OCI-LY7 (cell line): ENCODE measurements at regions of chr6 and their contacts with region 1.

Region 1: DNA sequence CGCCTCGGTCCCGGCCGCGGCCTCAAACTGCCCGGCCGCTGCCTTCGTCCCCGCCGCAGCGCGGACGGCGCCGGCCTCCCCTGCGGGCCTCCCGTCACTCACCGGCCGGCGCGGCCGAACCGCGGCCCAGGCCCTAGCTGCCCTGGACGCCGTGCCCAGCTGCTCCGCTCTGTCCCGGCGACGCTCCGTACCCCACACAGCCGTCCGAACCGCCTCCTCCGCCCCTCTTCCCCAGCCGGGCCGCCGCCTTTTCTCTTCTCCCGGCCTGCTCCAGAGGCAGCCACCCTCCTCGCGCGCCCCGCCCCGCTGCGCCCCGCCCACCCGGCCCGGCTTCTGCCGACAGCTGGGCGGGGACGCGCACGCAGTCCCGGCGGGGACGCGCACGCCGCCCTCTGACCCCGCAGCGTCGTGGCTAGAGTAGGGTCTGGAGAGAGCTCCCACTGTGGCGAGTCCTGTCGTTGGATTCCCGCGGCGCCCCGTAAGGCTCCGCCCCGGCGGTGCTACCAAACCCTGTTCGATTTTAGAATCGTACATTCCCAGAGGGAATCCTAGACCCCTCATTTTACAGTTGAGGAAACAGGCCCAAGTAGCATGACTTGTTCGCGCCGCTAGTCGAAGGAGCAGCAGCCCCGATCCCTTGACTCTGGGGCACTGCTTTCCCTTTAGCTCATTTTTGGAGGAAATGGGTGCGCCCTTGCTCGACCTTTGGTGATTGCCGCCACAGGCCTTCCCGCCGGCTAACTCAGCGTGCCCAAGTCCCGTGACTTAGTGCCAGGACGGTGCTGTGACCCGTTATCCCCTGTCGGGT is at the start of gene FBXO30:
- DNase-seq: peak; percentile 90
- H3K4me3 ChIP-seq: peak within 1 kb of the TSS; percentile 97
- H3K27ac ChIP-seq: peak within 1 kb of the TSS; percentile 71
- H3K4me1 ChIP-seq: peaks cover 40% of the 10 kb centered on the region
- CTCF ChIP-seq: 0 out of 2 replicates have a peak, but pooled peaks have one; percentile 18
- total RNA-seq, gene FBXO30: 4.6 and 5.3 TPM in 2 replicates

Region 2: GRCh38 chr6:145734486-145735355 is 80.0 kb before region 1 on chr6:
- CTCF ChIA-PET with region 1: interaction called, 3 read pairs
- POLR2A ChIA-PET with region 1: interaction called, 23 read pairs
- intact Hi-C with region 1: loop called (anchors 1 kb)
- DNase-seq: peak; percentile 78
- H3K4me3 ChIP-seq: peak overlapping the region; percentile 91
- H3K27ac ChIP-seq: peak overlapping the region; percentile 86
- H3K4me1 ChIP-seq: peaks cover 21% of the 10 kb centered on the region
- CTCF ChIP-seq: no peak

Region 3: DNA sequence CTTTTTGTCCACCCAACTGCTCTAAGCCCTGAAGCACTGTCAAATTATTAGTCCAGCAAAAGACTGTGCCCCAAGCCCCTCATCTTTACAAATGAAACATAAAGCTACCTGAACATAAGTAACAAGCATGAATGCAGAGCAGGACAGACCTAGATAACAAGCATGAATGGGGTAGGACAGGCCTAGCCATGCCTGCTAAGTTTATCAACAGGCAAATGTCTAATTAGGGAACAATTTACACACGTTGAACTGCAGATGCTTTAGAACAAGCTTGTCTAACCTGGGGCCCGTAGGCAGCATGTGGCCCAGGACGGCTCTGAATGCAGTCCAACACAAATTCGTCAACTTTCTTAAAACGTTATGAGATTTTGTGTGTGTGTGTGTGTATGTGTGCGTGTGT is 13.7 kb before region 1 on chr6:
- CTCF ChIA-PET with region 1: no interaction called
- POLR2A ChIA-PET with region 1: interaction called, 12 read pairs
- intact Hi-C with region 1: no loop called
- DNase-seq: no peak
- H3K4me3 ChIP-seq: no peak overlapping the region
- H3K27ac ChIP-seq: no peak overlapping the region
- H3K4me1 ChIP-seq: peaks cover 9% of the 10 kb centered on the region
- CTCF ChIP-seq: no peak

Region 4: DNA sequence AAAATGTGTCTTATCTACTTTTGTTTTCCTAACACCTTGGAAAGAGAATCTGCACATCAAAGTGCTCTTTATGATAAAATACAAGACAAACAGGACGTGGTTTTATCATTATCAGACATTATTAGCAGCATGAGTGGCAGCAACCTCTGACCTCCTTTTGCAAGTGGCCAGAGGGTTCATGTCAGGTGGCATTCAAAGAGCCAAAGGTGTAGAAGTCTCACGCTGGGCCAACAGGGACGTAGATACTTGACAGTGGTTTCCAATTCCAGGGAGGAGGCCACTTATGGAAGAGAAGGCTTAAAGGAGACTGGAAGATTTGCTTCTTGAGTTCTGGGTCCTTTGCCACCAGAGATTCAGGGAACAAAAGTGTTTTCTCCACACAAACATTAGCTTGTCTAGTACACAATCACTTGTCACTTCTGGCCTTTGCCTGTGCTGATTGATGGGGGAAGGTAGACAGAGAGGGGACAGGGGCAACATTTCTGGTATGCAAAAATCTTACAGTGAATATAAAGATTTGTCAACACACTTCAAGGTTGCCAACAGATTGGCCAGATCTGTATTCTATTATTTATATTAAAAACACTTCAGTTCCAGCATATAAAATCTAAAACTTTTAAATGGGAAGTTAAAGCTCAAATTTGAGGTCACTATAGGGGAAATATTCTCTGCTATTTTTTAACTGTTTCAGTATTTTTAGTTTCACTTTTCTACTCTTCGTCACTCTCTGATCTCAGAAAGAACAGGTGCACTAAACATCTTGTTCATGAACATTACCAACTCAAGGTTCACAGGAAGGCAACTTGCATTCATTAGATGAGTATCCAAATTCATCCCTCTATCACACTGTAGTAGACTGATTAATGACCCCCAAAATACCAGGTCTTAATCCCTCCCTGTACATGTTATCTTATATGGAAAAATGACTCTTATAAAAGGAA is 52.0 kb after region 1 on chr6:
- CTCF ChIA-PET with region 1: no interaction called
- POLR2A ChIA-PET with region 1: interaction called, 69 read pairs
- intact Hi-C with region 1: loop called (anchors 1 kb)
- DNase-seq: peak; percentile 77
- H3K4me3 ChIP-seq: peak overlapping the region; percentile 58
- H3K27ac ChIP-seq: peak overlapping the region; percentile 96
- H3K4me1 ChIP-seq: peaks cover 83% of the 10 kb centered on the region
- CTCF ChIP-seq: no peak

Region 5: DNA sequence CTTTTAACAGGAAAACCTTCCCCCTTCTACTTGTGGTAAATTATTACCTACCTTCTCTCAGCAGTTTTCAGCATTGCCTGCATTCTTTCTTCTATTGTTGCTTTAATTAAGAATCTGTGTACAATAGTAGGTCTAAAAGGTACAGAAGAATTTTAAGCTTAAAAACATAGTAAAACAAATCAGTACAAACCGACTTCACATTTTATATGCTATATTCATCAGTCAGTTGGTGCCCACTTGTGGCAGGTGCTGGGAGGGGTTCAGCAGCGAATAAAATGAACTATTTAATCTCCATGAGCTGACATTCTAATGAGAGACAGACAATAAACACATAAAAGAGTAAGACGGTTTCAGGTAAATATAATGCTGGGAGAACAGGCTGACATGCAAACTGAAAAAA is 73.3 kb after region 1 on chr6:
- CTCF ChIA-PET with region 1: no interaction called
- POLR2A ChIA-PET with region 1: interaction called, 8 read pairs
- intact Hi-C with region 1: loop called (anchors 5 kb)
- DNase-seq: peak; percentile 64
- H3K4me3 ChIP-seq: no peak overlapping the region
- H3K27ac ChIP-seq: no peak overlapping the region
- H3K4me1 ChIP-seq: peaks cover 7% of the 10 kb centered on the region
- CTCF ChIP-seq: peak; percentile 98

Region 6: DNA sequence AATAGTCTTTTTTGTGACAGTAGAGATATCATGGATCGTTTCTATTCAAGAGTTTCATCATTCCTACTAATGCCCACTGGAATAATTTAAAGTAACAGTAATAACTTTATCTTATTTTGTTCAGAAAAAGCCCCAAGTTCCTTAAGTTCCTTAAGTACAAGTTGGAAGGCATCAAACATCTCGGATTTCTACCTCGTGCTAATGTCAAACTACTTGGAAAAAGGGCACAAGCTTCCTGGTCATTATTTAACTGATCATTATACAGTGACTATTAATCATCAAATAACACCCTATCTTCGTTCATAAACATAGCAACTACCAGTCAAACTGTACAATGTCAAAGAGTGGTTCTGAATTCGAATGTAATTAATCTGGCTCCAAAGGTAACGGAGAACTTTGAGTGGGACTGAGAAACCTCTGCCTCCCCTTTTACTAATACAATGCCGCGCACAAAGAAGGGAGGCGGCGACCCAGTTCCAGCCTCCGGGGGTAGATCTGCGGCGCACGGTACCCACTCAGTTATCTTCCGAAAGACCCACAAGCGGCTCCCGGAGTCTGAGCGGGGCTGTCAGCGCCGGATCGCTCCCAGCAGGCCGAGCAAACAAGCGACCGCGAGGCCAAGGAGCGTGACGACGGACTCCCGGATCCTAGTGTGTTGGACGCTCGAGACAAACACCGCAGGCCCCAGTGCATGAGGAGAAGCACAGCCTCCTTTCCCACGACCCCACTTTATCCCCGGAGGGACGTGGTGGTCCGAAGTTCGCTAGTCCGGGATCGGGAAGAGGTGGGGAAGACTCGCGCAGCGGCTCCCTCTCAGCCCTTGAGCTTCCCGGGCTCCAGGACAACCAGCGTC is 148.7 kb after region 1 on chr6:
- CTCF ChIA-PET with region 1: no interaction called
- POLR2A ChIA-PET with region 1: interaction called, 5 read pairs
- intact Hi-C with region 1: loop called (anchors 1 kb)
- DNase-seq: peak; percentile 65
- H3K4me3 ChIP-seq: peak overlapping the region; percentile 84
- H3K27ac ChIP-seq: peak overlapping the region; percentile 40
- H3K4me1 ChIP-seq: peaks cover 41% of the 10 kb centered on the region
- CTCF ChIP-seq: no peak

Region 7: GRCh38 chr6:147202516-147203312 is 1388.0 kb after region 1 on chr6:
- CTCF ChIA-PET with region 1: no interaction called
- POLR2A ChIA-PET with region 1: no interaction called
- intact Hi-C with region 1: loop called (anchors 10 kb)
- DNase-seq: peak; percentile 95
- H3K4me3 ChIP-seq: peak overlapping the region; percentile 100
- H3K27ac ChIP-seq: peak overlapping the region; percentile 80
- H3K4me1 ChIP-seq: peaks cover 21% of the 10 kb centered on the region
- CTCF ChIP-seq: no peak